Psoas muscle (tissue), 8 donors: ENCODE measurements at regions of chr10 and their contacts with region 1.

Region 1: DNA sequence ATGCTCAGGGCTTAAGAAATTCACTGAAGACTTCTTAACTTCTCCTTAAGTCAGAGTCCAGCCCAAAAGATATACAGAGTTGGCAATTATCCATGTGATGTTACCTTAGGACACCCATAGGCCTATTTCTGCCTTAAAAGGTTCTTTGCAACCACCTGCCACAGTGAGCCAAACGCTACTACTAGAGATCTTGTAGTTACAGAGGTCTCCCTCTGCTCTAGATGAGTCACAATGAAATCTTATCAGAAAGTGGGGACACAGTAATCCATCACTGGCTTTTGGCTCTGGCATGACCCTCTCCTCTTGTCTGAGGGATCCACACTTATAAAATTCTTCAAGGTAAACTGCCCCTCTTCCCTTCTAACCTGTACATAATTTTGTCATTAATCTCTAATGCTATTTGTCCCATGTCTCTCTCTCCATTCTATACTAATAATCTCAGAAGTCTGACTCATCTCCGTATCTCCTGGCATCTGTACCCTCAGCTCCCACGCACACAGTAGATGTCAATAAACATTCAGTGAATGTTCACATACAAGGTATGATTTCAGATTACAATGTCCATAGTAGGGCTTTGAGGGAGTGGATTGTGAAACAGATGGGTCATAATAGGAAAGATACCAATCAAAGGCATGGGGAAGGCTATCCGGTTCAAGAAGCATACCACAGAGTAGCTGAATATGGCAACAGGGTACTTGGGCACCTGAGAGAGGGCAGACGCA is 112.1 kb downstream of the SGMS1 start:
- DNase-seq: no peak
- ATAC-seq: peak in 1 of 4 donors; percentile 26
- H3K4me3 ChIP-seq: no peak overlapping the region
- H3K27ac ChIP-seq: no peak overlapping the region
- H3K4me1 ChIP-seq: peaks cover 38% of the 10 kb centered on the region
- H3K27me3 ChIP-seq: no peaks in the 10 kb centered on the region
- CTCF ChIP-seq: no peak

Region 2: GRCh38 chr10:50456719-50457118 is 54.9 kb before region 1 on chr10:
- intact Hi-C with region 1: loop called in 1 of 2 experiments (anchors 5 kb)
- DNase-seq: no peak
- ATAC-seq: no peak
- H3K4me3 ChIP-seq: no peak overlapping the region
- H3K27ac ChIP-seq: no peak overlapping the region
- H3K4me1 ChIP-seq: no peaks in the 10 kb centered on the region
- H3K27me3 ChIP-seq: no peaks in the 10 kb centered on the region
- CTCF ChIP-seq: no peak